Left ventricle myocardium inferior (tissue), 1 donor: ENCODE measurements at regions of chr6 and their contacts with region 1.

Region 1: DNA sequence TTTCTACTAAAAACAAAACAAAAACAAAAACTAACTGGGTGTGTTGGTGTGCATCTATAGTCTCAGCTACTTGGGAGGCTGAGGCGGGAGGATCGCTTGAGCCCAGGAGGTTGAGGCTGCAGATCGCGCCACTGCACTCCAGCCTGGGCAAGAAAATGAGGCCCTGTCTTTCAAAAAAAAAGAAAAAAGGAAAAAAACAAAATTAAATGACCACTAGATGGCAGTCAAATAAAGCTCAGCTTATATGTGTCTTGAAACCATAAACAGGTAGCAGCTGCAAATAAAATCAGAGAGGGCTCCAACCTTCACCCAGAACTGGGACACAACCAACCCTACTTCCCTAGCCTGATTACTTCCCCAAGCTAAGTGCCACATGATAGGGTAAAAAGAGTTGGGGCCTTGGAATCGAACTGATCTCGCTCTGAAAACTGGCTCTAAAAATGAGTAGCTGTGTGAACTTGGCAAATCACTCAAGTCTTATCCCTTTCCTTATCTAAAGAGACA is 67.1 kb upstream of the ADGRF4 start:
- DNase-seq: no peak
- H3K4me3 ChIP-seq: no peak overlapping the region
- H3K27ac ChIP-seq: peak overlapping the region; percentile 2
- H3K4me1 ChIP-seq: peaks cover 26% of the 10 kb centered on the region
- H3K27me3 ChIP-seq: no peaks in the 10 kb centered on the region
- CTCF ChIP-seq: peak; percentile 79

Region 2: GRCh38 chr6:47733879-47734558 is 102.7 kb after region 1 on chr6:
- intact Hi-C with region 1: loop called (anchors 5 kb)
- DNase-seq: no peak
- H3K4me3 ChIP-seq: no peak overlapping the region
- H3K27ac ChIP-seq: no peak overlapping the region
- H3K4me1 ChIP-seq: peaks cover 8% of the 10 kb centered on the region
- H3K27me3 ChIP-seq: no peaks in the 10 kb centered on the region
- CTCF ChIP-seq: peak; percentile 65

Region 3: DNA sequence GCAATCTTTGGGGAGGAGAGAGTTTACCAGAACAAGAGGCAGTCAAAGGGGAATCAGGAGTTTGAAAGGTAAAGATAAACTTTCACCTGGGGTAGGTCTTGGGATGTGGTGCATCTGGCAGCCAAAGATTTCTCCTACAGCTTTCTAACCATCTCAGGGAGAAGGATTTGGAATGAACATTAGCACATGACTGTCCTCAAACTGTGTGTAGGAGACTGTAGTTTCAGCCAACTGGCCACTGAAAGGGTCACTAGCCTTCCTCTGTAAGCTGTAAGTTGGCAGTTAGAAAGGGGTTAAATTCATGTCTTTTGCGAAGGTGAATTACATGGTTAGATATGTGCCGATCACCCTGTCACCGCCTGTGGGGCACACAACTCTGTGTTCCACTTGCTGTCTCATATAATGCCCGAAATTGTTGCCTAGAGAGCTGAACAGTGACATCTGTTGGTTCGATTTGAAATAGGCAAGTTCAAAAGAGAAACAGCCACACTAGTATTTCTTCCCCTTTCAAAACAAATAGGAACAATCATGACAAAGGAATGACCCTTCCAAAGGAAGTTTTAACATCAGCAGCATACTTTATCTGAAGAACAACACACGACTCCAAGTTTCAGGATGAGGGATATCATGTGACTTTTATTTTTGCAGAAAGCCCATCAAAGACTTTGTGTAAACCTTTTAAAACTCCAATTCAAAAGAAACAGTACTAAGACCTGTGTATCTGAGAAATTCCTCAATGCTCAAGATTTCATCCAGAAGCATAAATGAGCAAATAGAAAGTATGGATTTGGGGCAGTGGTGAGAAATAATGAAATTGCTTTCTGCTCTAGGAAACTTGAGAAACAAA is 149.4 kb after region 1 on chr6:
- intact Hi-C with region 1: loop called (anchors 5 kb)
- DNase-seq: no peak
- H3K4me3 ChIP-seq: peak overlapping the region; percentile 30
- H3K27ac ChIP-seq: no peak overlapping the region
- H3K4me1 ChIP-seq: peaks cover 5% of the 10 kb centered on the region
- H3K27me3 ChIP-seq: peaks cover 7% of the 10 kb centered on the region
- CTCF ChIP-seq: peak; percentile 75